Thyroid gland (tissue), 4 donors: ENCODE measurements at regions of chr20 and their contacts with region 1.

Region 1: DNA sequence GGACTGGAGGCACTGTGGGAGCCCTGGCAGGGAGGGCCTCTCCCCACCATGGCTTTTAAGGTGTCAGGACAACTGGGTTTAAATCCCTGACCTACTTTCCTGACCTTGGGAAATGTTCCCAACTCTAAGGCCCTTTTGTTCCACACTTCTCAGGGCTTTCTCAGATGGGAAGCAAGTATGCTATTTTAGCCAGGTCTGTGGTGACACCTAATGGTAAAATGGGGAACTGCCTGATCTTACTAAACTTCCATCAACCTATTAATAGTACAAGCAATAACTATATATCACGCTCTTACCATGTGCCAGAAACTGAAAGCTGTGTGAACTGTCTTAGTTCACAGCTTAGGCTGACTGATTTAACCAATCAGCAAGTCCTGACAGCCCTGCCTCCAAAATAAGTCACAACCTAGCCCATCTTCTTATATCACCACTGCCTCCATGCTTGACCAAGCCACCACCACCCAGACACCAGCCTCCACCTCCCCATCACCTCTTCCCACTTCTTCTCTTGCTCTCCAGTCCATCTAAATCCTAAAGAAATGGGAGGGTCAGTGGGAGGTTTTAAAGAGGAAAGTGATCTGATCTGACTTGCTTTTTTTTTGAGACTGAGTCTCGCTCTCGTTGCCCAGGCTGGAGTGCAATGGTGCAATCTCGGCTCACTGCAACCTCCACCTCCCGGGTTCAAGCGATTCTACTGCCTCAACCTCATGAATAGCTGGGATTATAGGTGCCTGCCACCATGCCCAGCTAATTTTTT is 6.9 kb upstream of the BLCAP start:
- DNase-seq: peak; percentile 26 to 39
- H3K4me3 ChIP-seq: no peak overlapping the region
- H3K27ac ChIP-seq: no peak overlapping the region
- H3K4me1 ChIP-seq: no peaks in the 10 kb centered on the region
- H3K27me3 ChIP-seq: no peaks in the 10 kb centered on the region
- CTCF ChIP-seq: peak; percentile 57 to 92 (median 86)
- POLR2A ChIP-seq: no peak

Region 2: GRCh38 chr20:37192137-37192854 is 342.3 kb before region 1 on chr20:
- intact Hi-C with region 1: loop called (anchors 10 kb)
- DNase-seq: peak; percentile 89
- H3K4me3 ChIP-seq: no peak overlapping the region
- H3K27ac ChIP-seq: no peak overlapping the region
- H3K4me1 ChIP-seq: peaks cover 5 to 23% of the 10 kb centered on the region in 2 donors
- H3K27me3 ChIP-seq: no peaks in the 10 kb centered on the region
- CTCF ChIP-seq: peak; percentile 75 to 95 (median 88)
- POLR2A ChIP-seq: no peak

Region 3: GRCh38 chr20:37270576-37271420 is 263.8 kb before region 1 on chr20:
- intact Hi-C with region 1: loop called (anchors 5 kb)
- DNase-seq: no peak
- H3K4me3 ChIP-seq: no peak overlapping the region
- H3K27ac ChIP-seq: no peak overlapping the region
- H3K4me1 ChIP-seq: no peaks in the 10 kb centered on the region
- H3K27me3 ChIP-seq: no peaks in the 10 kb centered on the region
- CTCF ChIP-seq: no peak
- POLR2A ChIP-seq: no peak

Region 4: DNA sequence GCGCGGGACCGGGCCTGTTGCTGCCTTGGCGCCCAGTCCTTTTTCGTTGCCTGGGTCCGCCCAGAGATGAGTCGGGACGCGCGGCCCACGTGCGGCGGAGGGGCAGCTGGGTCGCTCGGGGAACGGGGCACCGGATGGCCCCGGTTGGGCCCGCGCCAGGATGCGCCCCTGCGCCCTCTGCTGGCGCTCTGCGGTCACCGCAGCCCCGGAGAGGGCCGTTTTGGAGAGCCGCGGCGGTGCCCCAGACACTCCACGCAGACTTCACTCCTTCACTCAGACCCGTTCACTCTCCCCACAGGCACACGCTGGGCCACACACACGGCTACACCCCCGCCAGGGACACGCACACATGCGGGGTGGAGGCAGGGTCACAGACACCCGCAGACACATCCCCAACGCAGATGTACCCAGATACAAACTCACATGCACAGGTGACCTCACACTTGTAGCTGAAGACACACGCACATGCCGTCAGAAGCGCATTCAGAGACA is 149.8 kb before region 1 on chr20:
- intact Hi-C with region 1: loop called (anchors 5 kb)
- DNase-seq: peak; percentile 46
- H3K4me3 ChIP-seq: peak overlapping the region in 1 of 3 donors; percentile 17
- H3K27ac ChIP-seq: no peak overlapping the region
- H3K4me1 ChIP-seq: peaks cover 0 to 4% of the 10 kb centered on the region in 2 donors
- H3K27me3 ChIP-seq: no peaks in the 10 kb centered on the region
- CTCF ChIP-seq: peak; percentile 69 to 90 (median 86)
- POLR2A ChIP-seq: no peak